ENCODE measurements at regions of chr10 and their contacts with region 1.

Region 1: GRCh38 chr10:76487582-76487981 is 1056.2 kb downstream of the LRMDA start:
- DNase-seq: no peak
- H3K4me3 ChIP-seq: no peak overlapping the region
- CTCF ChIP-seq: no peak

Region 2: GRCh38 chr10:76435157-76435556 is 52.4 kb before region 1 on chr10:
- in situ Hi-C with region 1: loop called (anchors 5 kb)
- DNase-seq: no peak
- H3K4me3 ChIP-seq: no peak overlapping the region
- CTCF ChIP-seq: no peak

Region 3: DNA sequence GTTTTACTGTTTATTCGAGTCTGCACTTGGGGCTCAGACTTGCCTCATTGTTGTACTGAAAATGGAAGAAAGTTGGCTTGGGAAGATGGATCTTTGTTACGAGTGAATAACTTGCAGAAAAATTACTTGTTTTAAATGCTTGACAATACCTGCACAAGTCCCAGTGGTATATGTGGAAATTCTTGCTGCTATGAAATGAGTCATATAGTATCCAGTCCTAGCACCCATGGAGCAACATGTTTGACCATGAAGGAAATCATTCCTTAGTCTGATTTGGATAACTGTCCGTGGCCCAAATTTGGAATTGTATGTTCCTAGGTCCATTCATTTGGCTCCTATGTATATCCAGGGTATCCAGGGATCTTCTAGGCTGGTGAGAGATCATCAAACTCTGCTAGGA is 53.2 kb after region 1 on chr10:
- in situ Hi-C with region 1: no loop called
- DNase-seq: no peak
- H3K4me3 ChIP-seq: no peak overlapping the region
- CTCF ChIP-seq: no peak

Region 4: DNA sequence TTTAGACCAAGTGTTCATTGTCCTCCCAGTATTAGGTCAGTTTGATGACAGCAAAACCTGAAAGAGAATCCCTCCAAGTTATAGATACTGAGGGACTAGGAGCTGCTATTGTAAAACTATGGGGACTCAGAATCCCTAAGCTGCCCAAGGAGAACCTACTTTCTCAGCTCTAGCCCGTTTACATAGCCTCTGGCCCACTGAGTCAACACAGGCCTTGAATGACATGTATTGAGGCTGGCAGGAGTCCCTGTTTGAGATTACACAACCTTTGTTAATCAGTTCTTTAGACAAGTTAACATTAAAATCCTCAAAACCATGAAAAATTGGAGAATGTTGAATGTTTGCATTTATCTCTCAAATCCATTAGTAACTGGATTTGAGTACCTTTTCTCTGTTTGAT is 71.0 kb after region 1 on chr10:
- in situ Hi-C with region 1: no loop called
- DNase-seq: peak; percentile 96
- H3K4me3 ChIP-seq: no peak overlapping the region
- CTCF ChIP-seq: no peak

Measured in astrocyte of the cerebellum (primary cell).